B cell (primary cell): ENCODE measurements at regions of chr15 and their contacts with region 1.

Region 1: GRCh38 chr15:81274931-81275707 is 48.8 kb downstream of the STARD5 start:
- DNase-seq: peak; percentile 86
- ATAC-seq: peak; percentile 94
- H3K4me3 ChIP-seq: no peak overlapping the region
- H3K4me3 Mint-ChIP-seq: peak overlapping the region; percentile 38
- H3K27ac ChIP-seq: peak overlapping the region in 1 of 2 donors; percentile 10
- H3K27ac Mint-ChIP-seq: peak overlapping the region; percentile 55
- H3K4me1 ChIP-seq: peaks cover 12 to 13% of the 10 kb centered on the region in 2 donors
- H3K4me1 Mint-ChIP-seq: peaks cover 20% of the 10 kb centered on the region
- H3K27me3 ChIP-seq: no peaks in the 10 kb centered on the region
- H3K27me3 Mint-ChIP-seq: no peaks in the 10 kb centered on the region
- CTCF ChIP-seq: peak; percentile 83

Region 2: GRCh38 chr15:81286621-81287121 is 11.6 kb after region 1 on chr15:
- CTCF ChIA-PET with region 1: interaction called, 146 read pairs
- POLR2A ChIA-PET with region 1: interaction called, 14 read pairs
- intact Hi-C with region 1: no loop called
- DNase-seq: peak; percentile 77
- ATAC-seq: peak; percentile 80
- H3K4me3 ChIP-seq: peak overlapping the region in 3 of 5 experiments; percentile 13 to 28 (median 21)
- H3K4me3 Mint-ChIP-seq: peak overlapping the region; percentile 65
- H3K27ac ChIP-seq: peak overlapping the region; percentile 92 to 98
- H3K27ac Mint-ChIP-seq: peak overlapping the region; percentile 96
- H3K4me1 ChIP-seq: peaks cover 65 to 81% of the 10 kb centered on the region in 2 donors
- H3K4me1 Mint-ChIP-seq: peaks cover 74% of the 10 kb centered on the region
- H3K27me3 ChIP-seq: no peaks in the 10 kb centered on the region
- H3K27me3 Mint-ChIP-seq: no peaks in the 10 kb centered on the region
- CTCF ChIP-seq: no peak

Region 3: DNA sequence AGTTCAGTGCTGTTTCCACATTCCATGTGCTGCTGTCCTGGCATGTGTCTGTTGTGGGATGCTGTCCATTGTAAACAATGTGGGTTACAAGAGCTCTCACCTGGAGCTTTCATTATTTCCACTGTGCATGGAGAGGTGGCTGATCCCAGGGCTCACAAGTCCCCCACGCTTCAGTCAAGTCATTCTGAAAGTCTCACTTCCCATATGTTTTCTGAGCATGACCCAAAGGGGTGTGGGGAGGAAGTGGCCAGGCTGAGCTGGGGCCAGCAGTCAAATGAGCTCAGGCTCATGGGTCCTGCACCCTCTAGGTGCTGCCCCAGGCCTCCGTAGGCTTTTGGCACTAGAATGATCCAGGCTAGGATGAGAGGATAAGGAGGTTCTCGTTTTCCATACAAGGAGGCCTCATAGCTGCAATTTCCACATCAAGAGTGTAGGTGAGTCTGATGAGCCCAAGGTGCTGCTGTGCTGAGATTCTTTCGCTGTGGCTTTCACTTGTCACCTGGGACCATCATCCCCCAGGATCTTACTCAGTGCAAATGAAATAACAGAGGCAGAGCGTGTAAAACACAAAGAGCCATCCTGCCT is 26.8 kb after region 1 on chr15:
- CTCF ChIA-PET with region 1: interaction called, 146 read pairs
- POLR2A ChIA-PET with region 1: interaction called, 5 read pairs
- intact Hi-C with region 1: no loop called
- DNase-seq: peak; percentile 84
- ATAC-seq: peak; percentile 73
- H3K4me3 ChIP-seq: peak overlapping the region; percentile 79 to 100 (median 87)
- H3K4me3 Mint-ChIP-seq: peak overlapping the region; percentile 100
- H3K27ac ChIP-seq: peak overlapping the region; percentile 95 to 98
- H3K27ac Mint-ChIP-seq: peak overlapping the region; percentile 98
- H3K4me1 ChIP-seq: peaks cover 70 to 92% of the 10 kb centered on the region in 2 donors
- H3K4me1 Mint-ChIP-seq: peaks cover 92% of the 10 kb centered on the region
- H3K27me3 ChIP-seq: no peaks in the 10 kb centered on the region
- H3K27me3 Mint-ChIP-seq: no peaks in the 10 kb centered on the region
- CTCF ChIP-seq: no peak

Region 4: GRCh38 chr15:81317642-81318017 is 42.5 kb after region 1 on chr15:
- CTCF ChIA-PET with region 1: interaction called, 306 read pairs
- POLR2A ChIA-PET with region 1: interaction called, 3 read pairs
- intact Hi-C with region 1: no loop called
- DNase-seq: no peak
- ATAC-seq: no peak
- H3K4me3 ChIP-seq: no peak overlapping the region
- H3K4me3 Mint-ChIP-seq: peak overlapping the region; percentile 41
- H3K27ac ChIP-seq: peak overlapping the region; percentile 26 to 88
- H3K27ac Mint-ChIP-seq: peak overlapping the region; percentile 64
- H3K4me1 ChIP-seq: peaks cover 66 to 75% of the 10 kb centered on the region in 2 donors
- H3K4me1 Mint-ChIP-seq: peaks cover 72% of the 10 kb centered on the region
- H3K27me3 ChIP-seq: no peaks in the 10 kb centered on the region
- H3K27me3 Mint-ChIP-seq: no peaks in the 10 kb centered on the region
- CTCF ChIP-seq: no peak

Region 5: DNA sequence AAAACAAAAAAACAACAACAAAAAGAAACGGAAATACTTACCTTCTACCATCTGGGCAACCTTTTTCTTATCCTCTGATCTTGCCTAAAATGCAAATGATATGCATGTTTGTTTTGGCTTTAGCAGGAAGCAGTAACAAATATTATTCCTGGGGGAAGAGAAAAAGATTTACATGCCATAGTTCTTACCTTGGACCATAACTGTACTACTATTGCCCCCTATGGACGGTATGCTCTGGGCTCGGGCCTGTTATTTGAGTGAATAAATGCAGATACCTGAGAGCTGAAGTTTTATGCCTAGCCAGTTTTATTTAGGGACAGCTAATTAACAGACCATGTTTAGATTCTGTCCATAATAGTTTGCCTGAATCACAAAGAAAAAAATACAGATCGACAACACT is 61.4 kb after region 1 on chr15:
- CTCF ChIA-PET with region 1: interaction called, 306 read pairs
- POLR2A ChIA-PET with region 1: interaction called, 5 read pairs
- intact Hi-C with region 1: loop called (anchors 1 kb)
- DNase-seq: peak; percentile 65
- ATAC-seq: peak; percentile 57
- H3K4me3 ChIP-seq: no peak overlapping the region
- H3K4me3 Mint-ChIP-seq: no peak overlapping the region
- H3K27ac ChIP-seq: no peak overlapping the region
- H3K27ac Mint-ChIP-seq: no peak overlapping the region
- H3K4me1 ChIP-seq: no peaks in the 10 kb centered on the region
- H3K4me1 Mint-ChIP-seq: peaks cover 7% of the 10 kb centered on the region
- H3K27me3 ChIP-seq: no peaks in the 10 kb centered on the region
- H3K27me3 Mint-ChIP-seq: no peaks in the 10 kb centered on the region
- CTCF ChIP-seq: peak; percentile 51

Region 6: GRCh38 chr15:81400640-81401236 is 125.6 kb after region 1 on chr15:
- CTCF ChIA-PET with region 1: interaction called, 125 read pairs
- POLR2A ChIA-PET with region 1: interaction called, 3 read pairs
- intact Hi-C with region 1: no loop called
- DNase-seq: peak; percentile 70
- ATAC-seq: no peak
- H3K4me3 ChIP-seq: no peak overlapping the region
- H3K4me3 Mint-ChIP-seq: no peak overlapping the region
- H3K27ac ChIP-seq: no peak overlapping the region
- H3K27ac Mint-ChIP-seq: no peak overlapping the region
- H3K4me1 ChIP-seq: no peaks in the 10 kb centered on the region
- H3K4me1 Mint-ChIP-seq: no peaks in the 10 kb centered on the region
- H3K27me3 ChIP-seq: no peaks in the 10 kb centered on the region
- H3K27me3 Mint-ChIP-seq: peaks cover 10% of the 10 kb centered on the region
- CTCF ChIP-seq: peak; percentile 84